HepG2 (cell line): ENCODE measurements at regions of chr19 and their contacts with region 1.

Region 1: GRCh38 chr19:1275260-1275975 is at the start of gene FAM174C:
- DNase-seq: peak; percentile 91
- ATAC-seq: peak; percentile 69
- H3K4me3 ChIP-seq: peak within 1 kb of the TSS; percentile 57 to 85 (median 73)
- H3K27ac ChIP-seq: peak within 1 kb of the TSS; percentile 100
- H3K4me1 ChIP-seq: peaks cover 58% of the 10 kb centered on the region
- H3K27me3 ChIP-seq: no peaks in the 10 kb centered on the region
- CTCF ChIP-seq: no peak; the same call in 1 of the 2 replicates
- EP300 ChIP-seq: 0 out of 4 replicates have a peak, but pooled peaks of 1 of the 2 experiments have one; percentile 16
- POLR2A ChIP-seq: peak in 1 of 2 experiments; percentile 89; a peak in 2 of 4 replicates
- RAD21 ChIP-seq: peak; percentile 77; the same call in 1 of the 2 replicates
- total RNA-seq, gene FAM174C: 21.9 and 31.3 TPM in 2 replicates

Region 2: GRCh38 chr19:1252821-1253513 is 22.5 kb before region 1 on chr19:
- CTCF ChIA-PET with region 1: no interaction called
- POLR2A ChIA-PET with region 1: interaction called, 11 read pairs
- in situ Hi-C with region 1: no loop called
- intact Hi-C with region 1: no loop called
- DNase-seq: peak; percentile 82
- ATAC-seq: peak; percentile 26
- H3K4me3 ChIP-seq: peak overlapping the region; percentile 86 to 90 (median 88)
- H3K27ac ChIP-seq: peak overlapping the region; percentile 94
- H3K4me1 ChIP-seq: peaks cover 49% of the 10 kb centered on the region
- H3K27me3 ChIP-seq: no peaks in the 10 kb centered on the region; a peak in 1 of 5 replicates
- CTCF ChIP-seq: no peak
- EP300 ChIP-seq: no peak
- POLR2A ChIP-seq: no peak
- RAD21 ChIP-seq: no peak

Region 3: GRCh38 chr19:1285737-1286360 is 10.4 kb after region 1 on chr19 and contains the start of gene EFNA2:
- CTCF ChIA-PET with region 1: no interaction called
- POLR2A ChIA-PET with region 1: interaction called, 20 read pairs
- in situ Hi-C with region 1: no loop called
- intact Hi-C with region 1: no loop called
- DNase-seq: no peak
- ATAC-seq: no peak
- H3K4me3 ChIP-seq: peak within 1 kb of the TSS; percentile 75 to 89 (median 82)
- H3K27ac ChIP-seq: peak within 1 kb of the TSS; percentile 75
- H3K4me1 ChIP-seq: peaks cover 67% of the 10 kb centered on the region
- H3K27me3 ChIP-seq: no peaks in the 10 kb centered on the region; a peak in 1 of 5 replicates
- CTCF ChIP-seq: no peak
- EP300 ChIP-seq: no peak
- POLR2A ChIP-seq: no peak
- RAD21 ChIP-seq: no peak
- total RNA-seq, gene EFNA2: 4.3 and 9.9 TPM in 2 replicates

Region 4: GRCh38 chr19:1315470-1316231 is 40.2 kb after region 1 on chr19:
- CTCF ChIA-PET with region 1: interaction called, 6 read pairs
- POLR2A ChIA-PET with region 1: no interaction called
- in situ Hi-C with region 1: loop called (anchors 5 kb)
- intact Hi-C with region 1: loop called (anchors 2 kb)
- DNase-seq: no peak
- ATAC-seq: peak; percentile 64
- H3K4me3 ChIP-seq: peak overlapping the region in 2 of 3 experiments; percentile 43 to 67; a peak in 3 of 6 replicates
- H3K27ac ChIP-seq: no peak overlapping the region
- H3K4me1 ChIP-seq: peaks cover 60% of the 10 kb centered on the region
- H3K27me3 ChIP-seq: peaks cover 8 to 55% of the 10 kb centered on the region in 2 experiments
- CTCF ChIP-seq: peak; percentile 88
- EP300 ChIP-seq: no peak
- POLR2A ChIP-seq: no peak
- RAD21 ChIP-seq: peak; percentile 89